GM10248 (cell line): ENCODE measurements at regions of chr1 and their contacts with region 1.

Region 1: GRCh38 chr1:20100632-20101355 is 18.5 kb downstream of the PLA2G2D start:
- DNase-seq: peak; percentile 77
- CTCF ChIP-seq: peak; percentile 79

Region 2: DNA sequence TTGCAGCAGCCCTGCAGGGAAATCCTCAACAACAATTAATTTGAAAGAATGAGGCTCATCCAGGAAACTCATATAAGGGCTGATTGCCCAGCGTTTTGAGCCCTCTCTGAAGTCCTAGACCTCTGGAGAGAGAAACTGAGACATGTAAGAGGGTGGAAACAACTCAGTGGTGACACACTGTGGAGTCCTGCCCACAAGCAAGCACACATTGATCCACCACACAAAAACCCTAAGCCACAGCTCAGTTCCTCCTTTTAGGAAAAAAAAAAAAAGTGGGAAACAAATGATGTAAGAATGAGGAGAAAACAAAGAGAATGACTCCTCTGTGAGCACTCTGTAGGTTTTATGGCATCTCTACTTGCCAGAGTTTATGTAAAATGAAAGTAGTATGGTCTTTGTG is 53.7 kb before region 1 on chr1:
- CTCF ChIA-PET with region 1: no interaction called
- POLR2A ChIA-PET with region 1: no interaction called
- DNase-seq: no peak
- CTCF ChIP-seq: no peak

Region 3: GRCh38 chr1:20069874-20070273 is 30.9 kb before region 1 on chr1 and contains the start of gene PLA2G5:
- CTCF ChIA-PET with region 1: no interaction called
- POLR2A ChIA-PET with region 1: no interaction called
- DNase-seq: no peak
- CTCF ChIP-seq: no peak

Region 4: GRCh38 chr1:20112279-20113000 is 11.6 kb after region 1 on chr1:
- CTCF ChIA-PET with region 1: interaction called, 15 read pairs
- POLR2A ChIA-PET with region 1: no interaction called
- DNase-seq: no peak
- CTCF ChIP-seq: no peak

Region 5: GRCh38 chr1:20124456-20125057 is 23.8 kb after region 1 on chr1:
- CTCF ChIA-PET with region 1: interaction called, 15 read pairs
- POLR2A ChIA-PET with region 1: no interaction called
- DNase-seq: no peak
- CTCF ChIP-seq: no peak